Right ventricle myocardium inferior (tissue), 1 donor: ENCODE measurements at regions of chr4 and their contacts with region 1.

Region 1: GRCh38 chr4:82865592-82865991 is 25.4 kb downstream of the SEC31A start:
- DNase-seq: no peak
- ATAC-seq: no peak

Region 2: DNA sequence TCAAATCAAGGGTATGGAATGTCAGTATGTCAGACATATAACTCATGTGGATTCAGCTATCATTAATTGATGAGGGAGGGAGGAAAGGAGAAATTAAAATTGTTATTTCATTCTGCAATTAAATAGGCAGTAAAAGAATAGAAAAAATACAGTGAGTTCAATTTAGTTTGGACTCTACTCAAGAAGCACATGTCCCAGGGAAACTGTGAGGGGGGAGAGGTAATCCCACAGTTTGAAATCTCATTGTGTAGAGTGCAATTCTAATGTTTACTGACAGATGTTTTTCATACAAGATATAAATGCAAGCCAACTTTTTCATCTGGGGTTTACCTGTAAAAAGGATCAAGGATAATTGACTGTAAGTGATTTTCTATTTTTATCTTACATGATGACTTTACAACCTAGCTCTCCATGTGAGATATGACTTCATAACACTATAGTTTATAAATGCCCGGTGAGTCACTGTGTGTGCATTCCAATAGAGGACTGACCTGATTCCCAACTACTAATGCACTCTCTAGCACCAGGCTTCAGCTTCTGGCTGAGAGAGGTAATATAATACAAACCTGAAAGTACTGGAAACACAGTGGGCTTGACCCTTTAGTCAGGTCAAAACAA is 31.8 kb before region 1 on chr4:
- intact Hi-C with region 1: loop called (anchors 5 kb)
- DNase-seq: no peak
- ATAC-seq: peak; percentile 83